H1 (cell line): ENCODE measurements at regions of chr14 and their contacts with region 1.

Region 1: DNA sequence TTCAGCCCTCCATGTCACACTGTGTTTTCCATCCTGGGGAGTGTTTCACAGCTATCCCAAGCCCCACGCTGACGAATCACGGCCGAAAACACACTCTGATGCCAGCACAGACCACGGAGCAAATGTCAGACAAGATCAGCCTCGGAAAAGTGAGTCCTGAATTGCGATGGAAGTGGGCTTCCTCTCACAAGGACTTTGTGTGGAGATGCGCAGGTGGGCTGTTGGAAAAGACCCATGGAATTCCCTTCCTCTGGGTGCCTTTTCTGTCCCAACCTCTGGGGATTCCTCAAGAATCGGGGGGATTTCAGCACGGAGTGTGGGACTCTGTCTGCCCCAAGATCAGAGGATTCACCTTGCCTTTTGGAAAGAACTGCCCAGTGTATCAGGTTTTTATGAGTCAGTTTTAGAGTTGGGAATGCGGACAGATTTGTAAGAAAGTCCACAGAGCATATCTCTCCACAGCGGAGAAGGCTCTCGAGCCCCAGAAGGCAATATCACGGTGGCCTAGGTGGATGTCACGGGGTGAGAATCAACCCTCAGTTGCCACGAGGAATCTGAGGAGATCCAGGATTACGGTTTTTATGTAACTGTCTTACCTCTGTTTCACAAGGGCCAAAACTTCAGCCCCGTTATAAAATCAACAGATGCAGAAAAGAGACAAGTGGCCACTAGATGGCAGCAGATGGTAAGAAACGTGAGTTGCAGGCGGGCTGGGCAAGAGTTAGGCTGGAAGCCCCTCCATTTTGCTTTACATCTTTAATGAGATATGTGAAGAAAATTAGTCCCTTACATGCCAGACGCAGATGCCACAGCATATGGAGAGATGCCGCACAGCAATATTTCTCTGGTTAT is 201.9 kb downstream of the DAD1 start:
- DNase-seq: peak; percentile 9 to 80
- H3K4me3 ChIP-seq: no peak overlapping the region
- H3K27ac ChIP-seq: no peak overlapping the region
- H3K4me1 ChIP-seq: no peaks in the 10 kb centered on the region
- H3K27me3 ChIP-seq: no peaks in the 10 kb centered on the region
- CTCF ChIP-seq: peak; percentile 38 to 88 (median 78)
- EP300 ChIP-seq: no peak
- POLR2A ChIP-seq: no peak
- RAD21 ChIP-seq: peak; percentile 92 to 95

Region 2: DNA sequence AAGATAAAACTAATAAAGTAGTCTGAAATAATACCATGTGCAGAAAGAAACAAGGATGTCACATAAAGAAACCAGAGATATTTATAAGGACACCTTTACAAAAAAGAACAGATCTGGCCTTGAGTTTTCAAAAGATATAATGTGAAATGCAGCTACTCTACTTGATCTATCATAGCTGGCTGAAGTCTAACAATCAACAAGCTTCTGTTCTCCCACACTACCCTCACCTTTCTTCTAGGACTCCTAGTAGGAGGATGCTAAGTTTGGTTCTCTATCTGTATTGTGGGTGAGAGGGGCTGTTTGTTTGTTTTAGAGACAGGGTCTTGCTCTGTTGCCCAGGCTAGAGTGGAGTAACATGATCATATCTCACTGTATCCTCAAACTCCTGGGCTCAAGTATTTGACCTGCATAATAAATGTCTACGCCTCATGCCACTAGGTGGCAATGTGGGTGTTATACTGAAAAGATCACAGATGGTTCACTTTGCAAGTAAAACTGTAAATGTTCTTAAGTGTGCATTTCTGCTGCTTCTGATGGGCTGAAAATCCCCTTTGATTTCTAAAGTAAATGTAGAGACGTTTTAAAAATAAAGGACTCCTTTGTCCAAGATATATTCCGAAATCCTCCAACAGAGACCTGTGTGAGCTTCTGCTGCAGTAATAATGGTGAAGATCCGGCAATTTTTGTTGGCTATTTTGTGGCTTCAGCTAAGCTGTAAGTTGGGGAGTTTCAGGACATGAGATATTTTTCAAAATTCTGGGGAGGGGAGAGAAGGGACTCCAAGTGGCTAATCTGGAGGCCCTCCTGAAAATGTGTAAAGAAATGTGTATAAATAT is 67.4 kb before region 1 on chr14:
- CTCF ChIA-PET with region 1: interaction called, 55 read pairs
- POLR2A ChIA-PET with region 1: no interaction called
- DNase-seq: no peak
- H3K4me3 ChIP-seq: no peak overlapping the region
- H3K27ac ChIP-seq: no peak overlapping the region
- H3K4me1 ChIP-seq: no peaks in the 10 kb centered on the region
- H3K27me3 ChIP-seq: no peaks in the 10 kb centered on the region
- CTCF ChIP-seq: peak in 2 of 3 experiments; percentile 59 to 66; a peak in 2 of 4 replicates
- EP300 ChIP-seq: no peak
- POLR2A ChIP-seq: no peak
- RAD21 ChIP-seq: peak; percentile 63 to 64

Region 3: GRCh38 chr14:22400655-22401259 is 13.6 kb after region 1 on chr14:
- CTCF ChIA-PET with region 1: interaction called, 12 read pairs
- POLR2A ChIA-PET with region 1: no interaction called
- DNase-seq: no peak
- H3K4me3 ChIP-seq: no peak overlapping the region
- H3K27ac ChIP-seq: no peak overlapping the region
- H3K4me1 ChIP-seq: no peaks in the 10 kb centered on the region
- H3K27me3 ChIP-seq: no peaks in the 10 kb centered on the region
- CTCF ChIP-seq: no peak
- EP300 ChIP-seq: no peak
- POLR2A ChIP-seq: no peak
- RAD21 ChIP-seq: no peak

Region 4: GRCh38 chr14:22466491-22466890 is 79.3 kb after region 1 on chr14:
- CTCF ChIA-PET with region 1: interaction called, 142 read pairs
- POLR2A ChIA-PET with region 1: no interaction called
- DNase-seq: no peak
- H3K4me3 ChIP-seq: no peak overlapping the region
- H3K27ac ChIP-seq: no peak overlapping the region
- H3K4me1 ChIP-seq: no peaks in the 10 kb centered on the region
- H3K27me3 ChIP-seq: no peaks in the 10 kb centered on the region
- CTCF ChIP-seq: no peak
- EP300 ChIP-seq: no peak
- POLR2A ChIP-seq: no peak
- RAD21 ChIP-seq: no peak

Region 5: GRCh38 chr14:22478670-22479069 is 91.5 kb after region 1 on chr14:
- CTCF ChIA-PET with region 1: interaction called, 142 read pairs
- POLR2A ChIA-PET with region 1: no interaction called
- DNase-seq: no peak
- H3K4me3 ChIP-seq: no peak overlapping the region
- H3K27ac ChIP-seq: no peak overlapping the region
- H3K4me1 ChIP-seq: peaks cover 0 to 8% (median 5%) of the 10 kb centered on the region in 4 experiments; a peak in 4 of 7 replicates
- H3K27me3 ChIP-seq: no peaks in the 10 kb centered on the region; a peak in 1 of 7 replicates
- CTCF ChIP-seq: no peak
- EP300 ChIP-seq: no peak
- POLR2A ChIP-seq: no peak
- RAD21 ChIP-seq: no peak

Region 6: GRCh38 chr14:22505697-22506377 is 118.7 kb after region 1 on chr14:
- CTCF ChIA-PET with region 1: no interaction called
- POLR2A ChIA-PET with region 1: no interaction called
- DNase-seq: no peak
- H3K4me3 ChIP-seq: no peak overlapping the region
- H3K27ac ChIP-seq: no peak overlapping the region
- H3K4me1 ChIP-seq: peaks cover 0 to 3% (median 1%) of the 10 kb centered on the region in 4 experiments; a peak in 3 of 7 replicates
- H3K27me3 ChIP-seq: no peaks in the 10 kb centered on the region; a peak in 1 of 7 replicates
- CTCF ChIP-seq: no peak
- EP300 ChIP-seq: no peak
- POLR2A ChIP-seq: peak in 1 of 2 experiments; percentile 66; a peak in 2 of 3 replicates
- RAD21 ChIP-seq: no peak

Region 7: DNA sequence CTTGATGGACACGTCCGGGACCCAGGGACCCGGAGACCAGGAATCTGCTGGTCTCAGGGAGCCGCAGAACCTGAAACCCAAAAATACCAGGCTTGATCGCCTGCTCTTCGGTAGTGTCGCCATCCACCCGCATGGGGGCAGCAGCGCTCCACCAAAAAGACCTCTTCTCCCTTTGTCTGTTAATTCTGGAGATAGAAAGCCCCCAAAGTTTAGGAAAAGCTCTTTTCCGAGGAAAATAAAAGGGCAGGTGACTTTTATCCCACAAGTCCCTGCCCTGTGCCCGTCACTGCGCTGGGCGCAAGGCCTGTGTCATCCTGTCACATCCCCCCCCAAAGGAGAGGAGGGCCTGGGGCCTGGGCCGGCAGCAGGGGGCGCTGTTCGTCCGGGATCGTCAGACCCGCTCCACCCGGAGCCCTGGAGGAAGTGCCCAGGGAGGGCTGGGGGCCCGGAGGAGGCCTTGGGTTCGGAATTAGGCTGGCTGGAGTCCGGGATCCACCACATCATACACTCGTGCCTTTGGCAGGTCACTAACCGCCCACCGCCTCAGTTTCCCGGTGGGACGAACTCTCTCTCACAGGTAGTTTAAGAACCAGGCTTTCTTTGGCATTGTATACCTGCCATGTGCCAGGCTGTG is 170.0 kb after region 1 on chr14:
- CTCF ChIA-PET with region 1: interaction called, 39 read pairs
- POLR2A ChIA-PET with region 1: no interaction called
- DNase-seq: peak; percentile 51 to 97
- H3K4me3 ChIP-seq: peak overlapping the region in 2 of 4 experiments; percentile 30 to 51; a peak in 3 of 8 replicates
- H3K27ac ChIP-seq: peak overlapping the region; percentile 37; the same call in 1 of the 2 replicates
- H3K4me1 ChIP-seq: peaks cover 2 to 10% (median 6%) of the 10 kb centered on the region in 4 experiments; a peak in 6 of 7 replicates
- H3K27me3 ChIP-seq: no peaks in the 10 kb centered on the region
- CTCF ChIP-seq: peak; percentile 72 to 80 (median 78)
- EP300 ChIP-seq: no peak
- POLR2A ChIP-seq: no peak
- RAD21 ChIP-seq: peak; percentile 78 to 80

Region 8: DNA sequence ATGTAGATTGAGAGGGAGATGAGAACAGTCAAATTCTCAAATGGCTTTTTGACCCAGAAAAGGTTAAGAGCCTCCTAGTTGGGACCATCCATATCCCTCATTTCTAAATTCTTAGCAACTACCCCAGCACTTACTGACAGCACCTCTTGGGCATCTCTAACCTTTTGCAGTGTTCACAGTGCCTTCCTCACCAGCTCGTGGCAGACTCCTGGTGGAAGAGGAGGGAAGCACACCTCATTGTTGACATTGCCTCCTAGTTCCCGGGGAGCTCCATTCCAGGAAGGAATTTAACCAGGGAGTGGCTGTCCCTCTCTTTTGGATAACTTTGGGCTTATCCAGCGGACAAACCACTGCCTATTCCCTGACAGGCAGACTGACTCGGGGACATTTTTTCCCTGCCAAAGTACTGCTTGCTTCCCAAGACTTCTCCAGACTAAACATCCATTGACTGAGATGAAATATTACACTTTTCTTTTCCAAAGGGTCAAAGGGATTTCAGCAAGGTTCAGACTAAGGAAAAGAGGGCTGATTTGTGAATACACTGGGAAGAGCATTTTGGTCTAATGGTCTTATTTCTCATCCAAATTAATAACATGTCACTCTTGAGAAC is 266.0 kb after region 1 on chr14:
- CTCF ChIA-PET with region 1: interaction called, 12 read pairs
- POLR2A ChIA-PET with region 1: no interaction called
- DNase-seq: peak; percentile 62 to 84
- H3K4me3 ChIP-seq: no peak overlapping the region
- H3K27ac ChIP-seq: no peak overlapping the region
- H3K4me1 ChIP-seq: no peaks in the 10 kb centered on the region
- H3K27me3 ChIP-seq: 0 out of 7 replicates have a peak, but pooled peaks cover 0 to 2% (median 0%) of the 10 kb centered on the region in 4 experiments
- CTCF ChIP-seq: peak; percentile 87 to 94 (median 89)
- EP300 ChIP-seq: no peak
- POLR2A ChIP-seq: no peak
- RAD21 ChIP-seq: peak; percentile 87